ENCODE measurements at regions of chr11 and their contacts with region 1.

Region 1: DNA sequence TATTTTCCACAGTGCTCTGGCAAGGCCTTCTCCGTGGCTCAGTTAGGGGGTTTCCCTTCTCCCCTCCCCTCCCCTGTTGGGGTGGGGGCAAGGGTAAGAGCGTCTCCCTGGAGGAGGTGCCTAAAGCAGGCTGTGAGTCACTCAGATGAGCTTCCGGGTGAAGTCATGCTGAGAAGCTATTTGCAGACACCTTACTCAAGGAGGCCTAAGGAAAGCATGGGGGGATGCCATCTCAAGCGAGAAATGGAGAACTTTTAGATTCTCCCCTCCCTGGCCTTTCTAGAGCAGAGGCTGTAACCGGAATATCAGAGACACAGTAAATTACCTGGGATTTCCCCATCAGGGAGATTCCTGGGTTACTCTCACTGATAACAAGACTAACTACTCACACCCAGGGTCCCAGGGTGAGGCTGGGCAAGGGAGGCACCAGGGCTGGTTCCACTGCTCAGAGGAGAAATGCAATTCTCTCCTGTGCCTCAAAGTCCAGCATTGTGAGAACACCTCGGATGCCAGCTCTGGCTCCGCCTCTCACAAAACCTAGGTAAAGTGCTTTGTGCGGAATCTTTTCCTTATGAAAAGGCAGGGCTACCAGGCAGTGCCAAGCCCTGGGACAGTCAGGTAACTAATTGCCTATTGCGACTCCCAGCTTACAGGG is 123.6 kb downstream of the ABTB2 start:
- DNase-seq: peak; percentile 80
- H3K4me3 Mint-ChIP-seq: peak overlapping the region; percentile 50
- H3K27ac Mint-ChIP-seq: peak overlapping the region; percentile 85
- H3K4me1 Mint-ChIP-seq: peaks cover 61% of the 10 kb centered on the region
- H3K27me3 Mint-ChIP-seq: peaks cover 12% of the 10 kb centered on the region

Region 2: DNA sequence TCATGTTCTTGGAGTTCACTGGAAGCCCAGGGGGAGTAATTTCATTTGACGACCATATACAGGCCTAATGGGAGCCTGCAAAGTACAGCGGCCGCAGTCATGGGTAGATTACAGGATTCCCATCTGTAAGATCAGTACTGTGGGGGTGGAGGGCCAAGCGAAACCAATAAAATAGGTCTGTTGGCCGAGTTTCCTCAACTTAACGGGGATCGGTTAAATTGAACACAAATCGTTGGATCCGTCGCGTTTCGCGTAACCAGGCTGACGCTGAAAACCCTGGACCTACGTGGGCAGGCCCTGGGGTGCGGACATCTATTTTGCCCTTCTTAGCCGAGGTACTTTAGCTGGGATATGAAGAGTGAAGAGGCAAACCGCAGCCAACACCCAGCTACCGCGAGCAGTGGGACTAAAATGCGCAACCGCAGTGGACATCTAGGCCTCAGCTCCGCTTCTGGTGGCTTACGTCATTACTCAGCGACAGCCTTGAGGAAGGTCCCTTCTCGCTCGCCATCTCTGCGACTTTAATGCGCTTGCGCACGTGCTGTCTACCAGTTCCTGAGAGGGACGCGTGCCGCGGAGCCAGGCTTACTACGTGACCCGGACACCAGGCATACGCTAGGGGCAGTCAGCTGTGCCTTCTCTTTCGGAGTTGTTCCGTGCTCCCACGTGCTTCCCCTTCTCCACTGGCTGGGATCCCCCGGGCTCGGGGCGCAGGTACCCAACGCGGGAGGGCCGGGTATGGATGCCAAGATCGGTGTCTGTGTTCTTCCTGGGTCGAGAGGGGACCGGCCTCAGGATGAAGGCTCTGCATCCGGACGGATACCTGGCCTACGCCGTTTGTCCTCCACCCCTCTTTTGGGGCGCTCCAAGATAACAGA is 128.9 kb before region 1 on chr11 and contains the start of gene NAT10:
- intact Hi-C with region 1: loop called (anchors 1 kb)
- DNase-seq: peak; percentile 97
- H3K4me3 Mint-ChIP-seq: peak within 1 kb of the TSS; percentile 95
- H3K27ac Mint-ChIP-seq: peak within 1 kb of the TSS; percentile 90
- H3K4me1 Mint-ChIP-seq: peaks cover 48% of the 10 kb centered on the region
- H3K27me3 Mint-ChIP-seq: no peaks in the 10 kb centered on the region
- total RNA-seq, gene NAT10: 157 and 158 TPM in 2 replicates

Region 3: GRCh38 chr11:34180040-34180813 is 54.0 kb before region 1 on chr11:
- intact Hi-C with region 1: loop called (anchors 1 kb)
- DNase-seq: no peak
- H3K4me3 Mint-ChIP-seq: no peak overlapping the region
- H3K27ac Mint-ChIP-seq: peak overlapping the region; percentile 58
- H3K4me1 Mint-ChIP-seq: peaks cover 42% of the 10 kb centered on the region
- H3K27me3 Mint-ChIP-seq: no peaks in the 10 kb centered on the region

Region 4: DNA sequence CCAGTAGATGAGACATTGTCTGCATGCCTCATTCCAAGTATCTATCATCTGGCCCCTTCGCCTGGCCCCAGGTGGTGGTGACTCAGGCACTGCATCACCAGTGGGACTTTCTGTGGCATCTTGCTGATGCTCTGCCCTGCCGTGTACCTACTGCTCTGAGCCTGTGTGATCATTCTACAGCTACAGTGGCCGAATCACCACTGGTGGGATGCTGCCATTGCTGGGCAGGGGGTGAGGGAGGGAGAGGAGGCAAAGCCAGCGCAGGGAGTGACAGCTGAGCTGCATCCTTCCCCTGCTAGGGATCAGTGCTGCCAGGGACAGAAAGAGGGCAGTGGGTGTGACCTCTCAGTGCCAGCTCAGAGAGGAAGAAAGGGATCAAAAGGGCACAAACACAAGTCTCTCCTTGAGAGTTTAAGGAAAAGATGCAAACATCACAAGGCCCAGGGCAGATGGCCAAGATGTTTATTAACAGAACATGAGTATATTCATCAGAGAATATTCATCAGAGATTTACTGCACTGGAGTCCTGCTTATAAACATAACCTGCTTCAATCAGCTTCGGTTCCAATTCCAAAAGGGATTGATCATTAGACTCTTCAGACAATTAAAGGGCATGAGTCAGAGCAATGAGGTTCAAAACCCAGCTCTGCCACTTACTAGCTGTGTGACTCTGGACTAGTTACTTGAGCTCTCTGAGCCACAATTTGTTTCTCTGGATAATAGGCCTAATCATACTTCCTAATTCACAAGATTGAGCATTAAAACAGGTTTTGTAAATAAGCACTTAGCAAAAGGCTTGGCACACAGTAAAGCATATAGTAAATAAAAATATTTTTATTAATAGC is 19.0 kb before region 1 on chr11:
- intact Hi-C with region 1: loop called (anchors 1 kb)
- DNase-seq: peak; percentile 19
- H3K4me3 Mint-ChIP-seq: peak overlapping the region; percentile 20
- H3K27ac Mint-ChIP-seq: peak overlapping the region; percentile 78
- H3K4me1 Mint-ChIP-seq: peaks cover 15% of the 10 kb centered on the region
- H3K27me3 Mint-ChIP-seq: peaks cover 13% of the 10 kb centered on the region

Region 5: GRCh38 chr11:34250732-34251639 is 16.8 kb after region 1 on chr11:
- intact Hi-C with region 1: loop called (anchors 1 kb)
- DNase-seq: peak; percentile 38
- H3K4me3 Mint-ChIP-seq: peak overlapping the region; percentile 52
- H3K27ac Mint-ChIP-seq: peak overlapping the region; percentile 6
- H3K4me1 Mint-ChIP-seq: peaks cover 63% of the 10 kb centered on the region
- H3K27me3 Mint-ChIP-seq: peaks cover 13% of the 10 kb centered on the region

Measured in activated T-helper 1 cell treated with anti-CD3 and anti-CD28 coated beads, Interleukin-12 subunit alpha, Interleukin-12 subunit beta, Interleukin-2, Interleukin-4 antibody, amounts not matched to agents 30 ng/mL and 10 ng/mL and 1 ng/mL, durations not matched to agents 14 hours and 24 hours and 36 hours (primary cell).